Mammary epithelial cell (primary cell): ENCODE measurements at regions of chr19 and their contacts with region 1.

Region 1: GRCh38 chr19:17947815-17948513 is 15.1 kb downstream of the CCDC124 start:
- DNase-seq: peak; percentile 87
- H3K4me3 ChIP-seq: peak overlapping the region; percentile 25 to 65 (median 46)
- H3K27ac ChIP-seq: no peak overlapping the region
- H3K4me1 ChIP-seq: peaks cover 23% of the 10 kb centered on the region
- H3K27me3 ChIP-seq: peaks cover 33% of the 10 kb centered on the region
- CTCF ChIP-seq: no peak

Region 2: GRCh38 chr19:17807731-17808316 is 140.1 kb before region 1 on chr19:
- CTCF ChIA-PET with region 1: no interaction called
- dilution Hi-C with region 1: no loop called
- in situ Hi-C with region 1: no loop called
- intact Hi-C with region 1: no loop called
- DNase-seq: no peak
- H3K4me3 ChIP-seq: no peak overlapping the region
- H3K27ac ChIP-seq: no peak overlapping the region
- H3K4me1 ChIP-seq: no peaks in the 10 kb centered on the region
- H3K27me3 ChIP-seq: no peaks in the 10 kb centered on the region
- CTCF ChIP-seq: no peak

Region 3: GRCh38 chr19:18000935-18001778 is 53.2 kb after region 1 on chr19:
- CTCF ChIA-PET with region 1: no interaction called
- dilution Hi-C with region 1: no loop called
- in situ Hi-C with region 1: no loop called
- intact Hi-C with region 1: loop called (anchors 2 kb)
- DNase-seq: peak; percentile 84
- H3K4me3 ChIP-seq: peak overlapping the region; percentile 66 to 84 (median 75)
- H3K27ac ChIP-seq: peak overlapping the region; percentile 46
- H3K4me1 ChIP-seq: peaks cover 4% of the 10 kb centered on the region
- H3K27me3 ChIP-seq: no peaks in the 10 kb centered on the region
- CTCF ChIP-seq: no peak

Region 4: DNA sequence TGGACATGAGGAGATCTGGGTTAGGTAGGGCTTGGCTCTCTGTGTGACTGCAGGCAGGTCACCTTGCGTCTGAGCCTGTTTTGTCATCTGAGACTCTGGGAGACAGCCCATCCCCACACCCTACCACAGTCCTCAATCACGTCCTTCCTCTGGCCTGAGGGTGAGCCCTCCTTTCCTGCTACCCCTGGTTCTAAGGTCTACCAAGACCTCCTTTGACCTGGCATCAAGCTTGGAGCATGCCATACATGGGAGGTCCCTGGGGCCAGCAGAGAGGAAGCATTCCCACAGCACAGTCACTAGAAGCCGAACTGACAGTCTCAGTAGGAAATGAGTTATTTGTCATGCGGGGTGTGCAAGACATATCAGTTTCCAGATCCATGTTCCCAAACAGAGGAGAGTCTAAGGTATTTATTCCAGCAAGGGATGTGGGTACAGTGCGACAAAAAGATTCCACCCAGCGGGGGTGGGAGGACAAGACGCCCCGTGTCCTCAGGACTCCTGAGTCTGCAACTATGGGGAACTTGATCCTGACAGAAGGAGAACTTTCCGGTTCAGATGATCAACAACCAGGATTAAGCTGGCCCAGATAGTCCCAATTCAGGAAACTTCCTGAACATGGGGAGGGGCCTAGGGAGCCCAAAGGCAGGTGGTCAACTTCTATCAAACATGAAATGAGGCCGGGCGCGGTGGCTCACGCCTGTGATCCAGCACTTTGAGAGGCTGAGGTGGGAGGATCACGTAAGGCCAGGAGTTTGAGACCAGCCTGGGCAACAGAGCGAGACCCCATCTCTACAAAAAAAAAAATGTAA is 69.5 kb after region 1 on chr19:
- CTCF ChIA-PET with region 1: no interaction called
- dilution Hi-C with region 1: loop called (anchors 5 kb)
- in situ Hi-C with region 1: no loop called
- intact Hi-C with region 1: no loop called
- DNase-seq: no peak
- H3K4me3 ChIP-seq: no peak overlapping the region
- H3K27ac ChIP-seq: no peak overlapping the region
- H3K4me1 ChIP-seq: peaks cover 18% of the 10 kb centered on the region
- H3K27me3 ChIP-seq: no peaks in the 10 kb centered on the region
- CTCF ChIP-seq: no peak

Region 5: DNA sequence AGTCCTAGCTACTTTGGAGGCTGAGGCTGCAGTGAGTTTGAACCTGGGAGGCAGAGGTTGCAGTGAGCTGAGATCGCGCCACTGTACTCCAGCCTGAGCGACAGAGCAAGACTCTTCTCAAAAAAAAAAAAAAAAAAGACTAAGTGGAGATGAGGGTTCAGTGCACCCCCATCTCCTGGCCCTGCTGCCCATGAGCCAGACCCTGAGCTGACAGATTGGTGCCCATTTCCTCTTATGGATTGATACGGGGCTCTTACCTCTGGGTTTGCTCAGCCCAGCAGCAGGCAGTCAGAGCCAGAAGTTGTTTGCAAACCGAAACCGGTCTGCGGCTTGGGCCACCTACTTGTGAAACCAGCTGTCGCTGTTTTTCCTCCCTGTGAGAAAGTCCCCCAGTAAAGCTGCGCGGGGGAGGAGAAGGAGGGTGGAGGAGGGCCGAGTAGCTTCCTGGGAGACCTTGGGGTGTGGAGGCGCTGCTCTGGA is 96.9 kb after region 1 on chr19:
- CTCF ChIA-PET with region 1: no interaction called
- dilution Hi-C with region 1: loop called (anchors 5 kb)
- in situ Hi-C with region 1: loop called in 1 of 2 experiments (anchors 25 kb)
- intact Hi-C with region 1: no loop called
- DNase-seq: peak; percentile 83
- H3K4me3 ChIP-seq: peak overlapping the region in 2 of 3 experiments; percentile 9 to 16
- H3K27ac ChIP-seq: no peak overlapping the region
- H3K4me1 ChIP-seq: peaks cover 11% of the 10 kb centered on the region
- H3K27me3 ChIP-seq: no peaks in the 10 kb centered on the region
- CTCF ChIP-seq: no peak

Region 6: GRCh38 chr19:18152444-18152816 is 204.5 kb after region 1 on chr19:
- CTCF ChIA-PET with region 1: no interaction called
- dilution Hi-C with region 1: no loop called
- in situ Hi-C with region 1: no loop called
- intact Hi-C with region 1: loop called (anchors 5 kb)
- DNase-seq: peak; percentile 88
- H3K4me3 ChIP-seq: peak overlapping the region; percentile 47 to 59 (median 57)
- H3K27ac ChIP-seq: peak overlapping the region; percentile 93
- H3K4me1 ChIP-seq: peaks cover 38% of the 10 kb centered on the region
- H3K27me3 ChIP-seq: no peaks in the 10 kb centered on the region
- CTCF ChIP-seq: peak; percentile 39 to 61